Left cardiac atrium (tissue), 4 donors: ENCODE measurements at regions of chr15 and their contacts with region 1.

Region 1: GRCh38 chr15:47870956-47871625 is 153.8 kb downstream of the SEMA6D start:
- DNase-seq: no peak
- ATAC-seq: peak in 1 of 2 donors; percentile 50

Region 2: DNA sequence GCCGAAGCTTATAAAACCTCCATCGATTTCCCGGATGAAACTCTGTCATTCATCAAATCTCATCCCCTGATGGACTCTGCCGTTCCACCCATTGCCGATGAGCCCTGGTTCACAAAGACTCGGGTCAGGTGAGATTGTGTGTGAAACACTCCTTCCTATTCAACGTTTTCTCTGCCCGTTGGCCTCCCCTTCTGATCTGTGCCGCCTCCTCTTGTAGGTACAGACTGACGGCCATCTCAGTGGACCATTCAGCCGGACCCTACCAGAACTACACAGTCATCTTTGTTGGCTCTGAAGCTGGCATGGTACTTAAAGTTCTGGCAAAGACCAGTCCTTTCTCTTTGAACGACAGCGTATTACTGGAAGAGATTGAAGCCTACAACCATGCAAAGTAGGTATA is 106.4 kb before region 1 on chr15:
- intact Hi-C with region 1: loop called in 1 of 2 experiments (anchors 5 kb)
- DNase-seq: no peak
- ATAC-seq: no peak